Heart right ventricle (tissue), 16 donors: ENCODE measurements at regions of chr1 and their contacts with region 1.

Region 1: GRCh38 chr1:193104906-193105820 is at the start of gene GLRX2:
- DNase-seq: peak; percentile 83 to 90
- ATAC-seq: peak; percentile 96 to 99 (median 98)
- H3K4me3 ChIP-seq: peak within 1 kb of the TSS; percentile 65 to 96 (median 84)
- H3K27ac ChIP-seq: peak within 1 kb of the TSS; percentile 25 to 96 (median 94)
- H3K4me1 ChIP-seq: peaks cover 0 to 26% (median 16%) of the 10 kb centered on the region in 9 donors
- H3K27me3 ChIP-seq: no peaks in the 10 kb centered on the region
- CTCF ChIP-seq: peak in 4 of 9 donors; percentile 19 to 43 (median 29)
- total RNA-seq, gene GLRX2: 27.6 to 51.9 (median 33.5) TPM

Region 2: GRCh38 chr1:192477630-192478029 is 627.5 kb before region 1 on chr1:
- intact Hi-C with region 1: loop called in 1 of 10 experiments (anchors 10 kb)
- DNase-seq: no peak
- ATAC-seq: peak in 7 of 8 donors; percentile 39 to 81 (median 76)
- H3K4me3 ChIP-seq: no peak overlapping the region
- H3K27ac ChIP-seq: peak overlapping the region in 1 of 10 donors; percentile 8
- H3K4me1 ChIP-seq: peaks cover 0 to 14% (median 0%) of the 10 kb centered on the region in 9 donors
- H3K27me3 ChIP-seq: peaks cover 0 to 11% (median 0%) of the 10 kb centered on the region in 7 donors
- CTCF ChIP-seq: peak in 8 of 9 donors; percentile 26 to 73 (median 63)

Region 3: GRCh38 chr1:193059268-193060225 is 45.6 kb before region 1 on chr1 and contains the starts of genes RO60 and UCHL5:
- intact Hi-C with region 1: loop called in 3 of 10 experiments (anchors 1 to 5 kb)
- DNase-seq: peak; percentile 94 to 97
- ATAC-seq: peak; percentile 97 to 99 (median 98)
- H3K4me3 ChIP-seq: peak within 1 kb of the TSS; percentile 69 to 96 (median 82)
- H3K27ac ChIP-seq: peak within 1 kb of the TSS; percentile 94 to 99 (median 96)
- H3K4me1 ChIP-seq: peaks cover 0 to 67% (median 47%) of the 10 kb centered on the region in 9 donors
- H3K27me3 ChIP-seq: no peaks in the 10 kb centered on the region
- CTCF ChIP-seq: peak in 2 of 9 donors; percentile 17 to 33
- total RNA-seq, gene RO60: 43.6 to 62.9 (median 55.9) TPM
- total RNA-seq, gene UCHL5: 25.7 to 45.2 (median 35.9) TPM

Region 4: DNA sequence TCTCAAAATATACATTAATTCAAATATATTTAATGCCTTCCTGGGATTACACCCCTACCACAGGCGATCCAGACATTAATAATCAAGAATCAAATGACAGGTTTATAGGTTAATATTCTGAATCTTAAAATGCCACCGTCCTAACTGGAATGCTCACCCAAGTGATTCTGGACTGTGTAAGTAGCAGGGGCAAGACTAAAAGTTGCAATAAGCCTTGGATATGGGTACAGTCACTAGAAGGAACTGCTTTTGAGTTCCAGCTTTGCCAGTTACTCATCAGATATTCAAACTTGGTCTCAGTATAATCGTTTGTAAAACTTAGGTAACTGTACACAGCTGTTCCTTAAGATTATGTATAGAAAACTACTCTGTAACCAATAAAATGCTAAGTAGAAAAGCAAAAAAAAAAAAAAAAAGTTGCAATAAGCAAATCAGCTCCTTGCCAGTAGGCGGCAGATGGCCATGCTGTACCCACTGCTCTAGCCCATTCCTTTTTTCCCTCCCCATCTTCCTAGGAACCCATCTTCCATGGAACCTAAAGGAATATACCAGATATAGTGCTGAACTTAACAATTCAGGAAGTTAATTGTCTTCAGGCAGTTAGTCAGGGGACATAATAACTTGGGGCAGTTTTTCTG is 35.3 kb before region 1 on chr1:
- intact Hi-C with region 1: loop called in 3 of 10 experiments (anchors 5 kb)
- DNase-seq: no peak
- ATAC-seq: no peak
- H3K4me3 ChIP-seq: no peak overlapping the region
- H3K27ac ChIP-seq: peak overlapping the region in 2 of 10 donors; percentile 23 to 55
- H3K4me1 ChIP-seq: peaks cover 3 to 37% (median 22%) of the 10 kb centered on the region in 9 donors
- H3K27me3 ChIP-seq: no peaks in the 10 kb centered on the region
- CTCF ChIP-seq: peak in 2 of 9 donors; percentile 7 to 20

Region 5: GRCh38 chr1:193087893-193088292 is 17.3 kb before region 1 on chr1:
- intact Hi-C with region 1: loop called in 1 of 10 experiments (anchors 2 kb)
- DNase-seq: no peak
- ATAC-seq: peak in 1 of 8 donors; percentile 39
- H3K4me3 ChIP-seq: no peak overlapping the region
- H3K27ac ChIP-seq: no peak overlapping the region
- H3K4me1 ChIP-seq: peaks cover 0 to 17% (median 0%) of the 10 kb centered on the region in 9 donors
- H3K27me3 ChIP-seq: no peaks in the 10 kb centered on the region
- CTCF ChIP-seq: no peak

Region 6: DNA sequence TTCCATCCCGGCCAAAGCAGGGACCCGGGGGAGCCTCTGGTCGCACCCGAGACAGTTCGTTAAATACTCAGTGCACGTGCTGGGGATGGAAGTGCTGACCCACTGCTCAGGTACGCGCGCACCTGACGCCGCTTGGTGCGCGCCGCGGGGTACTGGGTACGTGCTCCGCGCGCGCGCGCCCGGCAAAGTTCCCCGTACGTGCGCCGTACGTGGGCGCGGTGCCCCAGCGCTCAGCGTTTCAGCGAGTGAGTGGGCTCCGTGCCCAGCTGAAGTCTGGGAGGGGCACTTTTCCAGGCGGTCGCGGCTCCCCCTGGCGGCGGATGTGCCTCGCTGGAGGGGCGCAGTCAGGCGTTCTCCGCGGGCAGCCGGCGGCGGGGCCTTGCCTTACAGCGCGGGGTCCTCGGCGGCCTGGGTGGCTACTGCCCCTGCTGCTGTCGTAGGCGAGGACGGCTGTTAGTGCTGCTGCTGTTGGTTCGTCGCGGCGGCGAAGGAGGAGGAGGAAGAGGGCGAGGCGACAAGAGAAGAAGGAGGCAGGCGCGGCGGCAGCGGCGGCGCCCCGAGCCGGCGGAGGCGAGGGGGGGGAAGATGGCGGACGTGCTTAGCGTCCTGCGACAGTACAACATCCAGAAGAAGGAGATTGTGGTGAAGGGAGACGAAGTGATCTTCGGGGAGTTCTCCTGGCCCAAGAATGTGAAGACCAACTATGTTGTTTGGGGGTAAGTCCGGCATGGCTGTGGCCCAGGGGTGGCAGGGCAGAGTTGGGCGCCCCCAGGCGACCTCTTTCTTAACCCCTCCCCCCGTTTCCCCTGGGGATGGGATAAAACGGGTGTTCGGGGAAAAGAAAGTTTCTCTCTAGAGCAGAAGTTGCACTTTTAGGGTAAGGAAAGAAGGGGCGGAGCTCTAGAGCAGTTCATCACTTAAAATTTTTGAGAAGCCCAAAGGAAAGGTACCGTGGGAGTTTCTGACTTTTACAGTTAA is 16.7 kb after region 1 on chr1 and contains the start of gene CDC73:
- intact Hi-C with region 1: loop called in 6 of 10 experiments (anchors 1 to 2 kb)
- DNase-seq: peak; percentile 97 to 99
- ATAC-seq: peak; percentile 98 to 100 (median 99)
- H3K4me3 ChIP-seq: peak within 1 kb of the TSS; percentile 59 to 91 (median 72)
- H3K27ac ChIP-seq: peak within 1 kb of the TSS; percentile 89 to 98 (median 95)
- H3K4me1 ChIP-seq: peaks cover 10 to 41% (median 34%) of the 10 kb centered on the region in 9 donors
- H3K27me3 ChIP-seq: no peaks in the 10 kb centered on the region
- CTCF ChIP-seq: peak; percentile 72 to 98 (median 94)
- total RNA-seq, gene CDC73: 47.9 to 70.2 (median 57.0) TPM